ENCODE measurements at regions of chr19 and their contacts with region 1.

Region 1: DNA sequence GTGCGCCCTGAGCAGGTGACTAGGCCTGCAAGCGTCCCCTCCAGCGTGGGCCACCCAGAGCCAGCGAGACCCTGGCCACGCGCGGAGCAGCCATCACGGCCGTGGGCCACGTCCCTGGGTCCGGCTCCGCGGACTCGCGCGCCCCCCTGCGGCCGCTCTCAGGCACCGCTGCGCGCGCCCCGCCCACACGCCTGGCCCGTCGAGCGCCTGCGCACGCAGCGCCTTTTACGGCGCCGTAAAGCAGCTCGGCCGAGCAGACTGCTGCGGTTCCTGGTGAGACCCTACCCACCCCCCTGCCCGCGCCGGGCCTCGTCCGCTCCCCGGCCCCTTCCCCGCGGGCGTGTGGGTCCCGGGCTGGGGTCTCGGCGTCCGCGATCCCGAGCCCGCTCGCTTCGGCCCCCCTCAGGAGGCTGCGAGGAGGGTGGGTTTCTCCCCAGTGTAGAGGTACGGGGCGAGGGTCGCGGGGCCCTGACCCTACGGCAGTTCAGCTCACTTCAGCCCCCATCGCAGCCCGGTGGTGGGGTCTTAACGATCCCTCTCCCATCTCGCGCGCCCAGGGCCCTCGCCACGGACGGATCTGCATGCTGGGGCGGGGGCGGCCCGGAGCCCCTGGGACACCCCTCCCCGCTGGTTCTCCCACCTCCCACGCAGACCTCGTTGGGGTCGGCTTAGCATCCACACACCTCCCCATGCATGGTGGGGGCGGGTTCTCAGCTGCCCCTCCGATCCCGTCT is at the start of gene TRAPPC5:
- DNase-seq: peak; percentile 75 to 98 (median 82)

Region 2: GRCh38 chr19:7349961-7350711 is 330.6 kb before region 1 on chr19:
- intact Hi-C with region 1: loop called (anchors 1 kb)
- DNase-seq: no peak

Region 3: DNA sequence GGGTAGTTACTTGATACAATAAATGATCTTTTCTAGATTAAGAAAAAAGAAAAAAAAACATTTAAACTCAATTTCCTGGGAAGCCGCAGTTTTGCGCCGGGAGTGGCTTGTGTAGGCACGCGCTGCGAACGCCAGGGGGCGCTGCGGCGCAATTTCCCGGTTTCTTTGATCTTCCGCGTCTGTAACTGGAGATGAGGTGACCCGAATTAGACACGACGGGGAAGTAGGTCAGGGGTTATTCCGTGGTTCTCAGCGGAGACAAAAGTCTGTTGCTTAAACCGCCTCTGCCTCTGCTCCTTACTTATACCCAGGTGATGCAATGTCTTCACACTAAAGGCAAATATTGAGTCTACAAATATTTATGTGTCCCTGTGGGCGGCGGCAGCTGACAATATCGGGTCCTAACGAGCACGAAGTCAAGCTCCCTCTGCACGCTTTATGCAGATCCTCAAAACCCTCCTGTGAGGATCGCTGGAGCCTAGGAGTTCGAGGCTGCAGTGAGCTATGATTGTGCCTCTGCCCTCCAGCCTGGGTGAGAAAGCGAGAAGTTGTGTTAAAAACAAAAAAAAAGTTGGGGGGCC is 28.6 kb before region 1 on chr19:
- intact Hi-C with region 1: loop called (anchors 1 kb)
- DNase-seq: peak; percentile 49 to 97 (median 82)

Measured in posterior cingulate gyrus (tissue), 11 donors.